A673 (cell line): ENCODE measurements at regions of chr7 and their contacts with region 1.

Region 1: DNA sequence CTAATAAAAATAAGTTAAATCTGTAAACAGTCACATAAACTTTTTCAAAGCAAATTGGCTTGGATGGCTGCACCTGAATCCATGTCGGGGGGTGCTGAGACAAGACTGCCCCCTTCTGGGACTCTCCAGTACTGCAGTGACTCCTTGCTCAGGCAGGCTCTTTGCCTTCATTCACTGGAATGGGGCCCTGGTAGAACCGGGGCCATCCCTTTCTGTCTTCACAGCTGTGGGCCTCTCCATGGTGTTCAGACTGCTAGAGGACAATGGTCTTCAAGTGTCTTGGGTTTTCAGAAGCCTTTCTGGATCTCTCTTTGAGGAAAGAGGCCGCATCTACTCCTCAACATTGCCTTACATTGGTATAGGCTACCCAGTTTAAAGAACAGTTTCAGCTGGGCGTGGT is 16.1 kb upstream of the IMPDH1 start:
- DNase-seq: peak; percentile 78
- H3K4me3 ChIP-seq: no peak overlapping the region
- H3K27ac ChIP-seq: no peak overlapping the region
- H3K4me1 ChIP-seq: no peaks in the 10 kb centered on the region
- H3K27me3 ChIP-seq: no peaks in the 10 kb centered on the region
- CTCF ChIP-seq: peak; percentile 93

Region 2: GRCh38 chr7:127870231-127870907 is 555.5 kb before region 1 on chr7:
- CTCF ChIA-PET with region 1: no interaction called
- POLR2A ChIA-PET with region 1: no interaction called
- intact Hi-C with region 1: no loop called
- DNase-seq: no peak
- H3K4me3 ChIP-seq: no peak overlapping the region
- H3K27ac ChIP-seq: no peak overlapping the region
- H3K4me1 ChIP-seq: no peaks in the 10 kb centered on the region
- H3K27me3 ChIP-seq: no peaks in the 10 kb centered on the region
- CTCF ChIP-seq: no peak

Region 3: DNA sequence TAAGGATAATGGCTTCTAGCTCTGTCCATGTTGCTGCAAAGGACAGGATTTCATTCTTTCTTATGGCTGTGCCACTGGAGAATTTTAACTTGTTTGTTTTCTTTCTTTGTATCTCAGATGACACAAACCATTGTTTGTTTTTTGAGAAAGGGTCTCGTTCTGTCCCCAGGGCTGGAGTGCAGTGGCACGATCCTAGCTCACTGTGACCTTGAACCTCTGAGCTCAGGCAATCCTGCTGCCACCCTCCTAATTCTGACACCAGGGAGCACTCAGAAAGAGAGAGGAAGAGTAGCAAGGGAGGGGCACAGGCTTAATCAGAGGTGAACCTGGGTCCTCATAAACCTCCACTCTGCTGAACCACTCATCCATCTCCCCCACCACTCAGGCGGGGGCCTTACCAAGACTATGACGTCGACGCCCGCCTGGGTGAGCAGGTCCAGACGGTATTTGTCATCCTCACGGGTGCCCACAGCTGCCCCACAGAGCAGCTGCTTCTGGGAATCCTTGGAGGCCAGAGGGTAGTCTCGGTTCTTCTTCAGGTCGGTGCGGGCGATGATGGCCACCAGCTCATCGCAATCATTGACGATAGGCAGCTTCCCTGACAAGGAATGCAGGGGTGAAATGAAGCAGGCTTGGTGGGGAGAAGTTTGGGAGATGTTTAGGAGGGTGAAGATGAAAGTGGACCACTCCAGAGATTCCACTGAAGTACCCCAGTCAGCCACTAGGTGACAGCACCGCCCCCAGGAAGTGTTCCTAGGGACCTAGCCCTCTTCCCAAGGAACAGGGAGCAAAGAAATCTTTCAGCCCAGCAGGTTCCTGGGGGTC is 27.6 kb before region 1 on chr7:
- CTCF ChIA-PET with region 1: no interaction called
- POLR2A ChIA-PET with region 1: no interaction called
- intact Hi-C with region 1: loop called (anchors 1 kb)
- DNase-seq: peak; percentile 70
- H3K4me3 ChIP-seq: no peak overlapping the region
- H3K27ac ChIP-seq: no peak overlapping the region
- H3K4me1 ChIP-seq: no peaks in the 10 kb centered on the region
- H3K27me3 ChIP-seq: no peaks in the 10 kb centered on the region
- CTCF ChIP-seq: peak; percentile 85

Region 4: DNA sequence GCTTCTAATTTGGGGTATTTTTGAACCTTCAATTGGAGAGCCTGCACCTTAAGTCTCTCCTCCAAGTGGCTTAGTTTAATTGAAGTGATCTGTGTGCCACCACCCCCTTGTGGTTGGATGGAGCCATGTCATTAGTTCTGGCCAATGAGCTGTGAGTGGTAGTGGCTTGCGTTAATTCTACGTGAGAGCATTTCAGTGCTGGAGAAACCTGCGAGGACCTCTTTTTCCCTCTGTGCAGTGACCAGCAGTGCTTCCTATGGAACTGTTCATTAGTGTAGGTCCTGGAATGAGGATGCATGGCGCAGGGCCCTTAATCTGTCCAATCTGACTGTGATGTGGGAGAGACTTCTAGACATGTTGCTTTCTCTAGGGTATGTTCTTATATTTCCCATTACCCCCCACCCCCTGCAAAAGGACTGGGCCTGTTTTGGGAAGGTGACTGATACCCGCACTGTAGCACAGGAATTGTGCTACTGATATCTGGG is 33.6 kb after region 1 on chr7:
- CTCF ChIA-PET with region 1: interaction called, 27 read pairs
- POLR2A ChIA-PET with region 1: no interaction called
- intact Hi-C with region 1: loop called (anchors 1 kb)
- DNase-seq: peak; percentile 84
- H3K4me3 ChIP-seq: no peak overlapping the region
- H3K27ac ChIP-seq: no peak overlapping the region
- H3K4me1 ChIP-seq: peaks cover 25% of the 10 kb centered on the region
- H3K27me3 ChIP-seq: no peaks in the 10 kb centered on the region
- CTCF ChIP-seq: peak; percentile 79

Region 5: DNA sequence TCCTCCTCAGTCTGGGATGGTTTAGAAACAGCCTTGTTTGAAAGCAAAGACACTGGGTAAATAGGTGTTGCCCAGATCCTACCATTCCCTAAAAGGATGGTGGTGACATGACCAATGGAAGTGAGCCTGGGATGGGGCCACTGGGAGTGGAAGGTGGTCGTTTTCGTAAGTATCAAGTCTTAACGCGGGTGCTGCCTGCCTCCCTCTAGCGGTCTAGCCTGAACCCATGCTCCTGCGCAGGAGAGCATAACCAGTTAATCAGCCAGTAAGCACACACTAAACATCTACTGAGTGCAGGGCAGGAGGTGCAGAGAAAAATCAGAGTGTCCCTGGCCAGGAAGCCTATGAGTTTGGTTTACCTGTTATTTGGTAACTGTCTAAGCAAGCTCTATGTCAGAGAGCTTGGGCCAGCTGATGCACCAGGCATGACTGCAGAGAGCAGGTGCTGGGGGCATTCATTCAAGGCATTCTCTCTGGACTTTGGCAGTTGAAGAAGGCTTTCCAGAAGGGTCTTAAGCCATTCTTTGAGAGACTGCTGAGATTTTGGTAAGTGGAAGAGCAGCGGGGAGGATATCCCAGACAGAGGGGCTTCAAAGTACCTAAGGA is 247.2 kb after region 1 on chr7:
- CTCF ChIA-PET with region 1: no interaction called
- POLR2A ChIA-PET with region 1: no interaction called
- intact Hi-C with region 1: loop called (anchors 10 kb)
- DNase-seq: peak; percentile 25
- H3K4me3 ChIP-seq: no peak overlapping the region
- H3K27ac ChIP-seq: no peak overlapping the region
- H3K4me1 ChIP-seq: no peaks in the 10 kb centered on the region
- H3K27me3 ChIP-seq: no peaks in the 10 kb centered on the region
- CTCF ChIP-seq: peak; percentile 60

Region 6: GRCh38 chr7:128883622-128884501 is 458.0 kb after region 1 on chr7:
- CTCF ChIA-PET with region 1: interaction called, 4 read pairs
- POLR2A ChIA-PET with region 1: no interaction called
- intact Hi-C with region 1: loop called (anchors 1 kb)
- DNase-seq: peak; percentile 89
- H3K4me3 ChIP-seq: no peak overlapping the region
- H3K27ac ChIP-seq: no peak overlapping the region
- H3K4me1 ChIP-seq: no peaks in the 10 kb centered on the region
- H3K27me3 ChIP-seq: no peaks in the 10 kb centered on the region
- CTCF ChIP-seq: peak; percentile 97

Region 7: DNA sequence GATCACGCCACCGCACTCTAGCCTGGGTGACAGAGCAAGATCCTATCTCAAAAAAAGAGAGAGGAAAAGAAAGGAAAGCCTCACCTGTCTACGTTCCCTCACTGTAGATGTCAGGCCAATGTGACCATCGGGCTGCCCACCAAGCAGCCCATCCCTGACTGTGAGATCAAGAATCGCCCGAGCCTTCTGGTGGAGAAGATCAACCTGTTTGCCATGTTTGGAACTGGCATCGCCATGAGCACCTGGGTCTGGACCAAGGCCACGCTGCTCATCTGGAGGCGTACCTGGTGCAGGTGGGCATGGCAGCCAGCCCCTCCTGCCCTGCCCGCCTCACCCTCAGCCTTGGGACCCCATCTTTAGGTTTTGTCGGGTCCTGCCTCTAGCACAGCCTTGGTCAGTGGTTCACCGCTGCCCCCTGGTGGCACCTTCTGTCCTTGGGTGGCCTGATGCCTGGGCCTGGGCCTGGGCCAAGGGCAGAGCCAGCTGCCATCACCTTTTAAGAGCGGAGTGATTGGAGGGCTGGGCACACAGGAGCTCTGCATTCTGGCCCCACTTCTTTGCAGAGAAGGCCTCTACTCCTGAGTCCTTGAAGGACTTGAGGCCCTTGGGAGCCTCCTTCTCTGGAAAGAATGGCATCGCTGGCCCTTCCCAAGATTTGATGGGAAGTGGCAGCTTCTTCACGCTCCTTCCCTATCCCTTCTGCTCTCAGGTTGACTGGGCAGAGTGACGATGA is 784.6 kb after region 1 on chr7:
- CTCF ChIA-PET with region 1: interaction called, 3 read pairs
- POLR2A ChIA-PET with region 1: no interaction called
- intact Hi-C with region 1: loop called (anchors 5 kb)
- DNase-seq: peak; percentile 52
- H3K4me3 ChIP-seq: no peak overlapping the region
- H3K27ac ChIP-seq: no peak overlapping the region
- H3K4me1 ChIP-seq: no peaks in the 10 kb centered on the region
- H3K27me3 ChIP-seq: no peaks in the 10 kb centered on the region
- CTCF ChIP-seq: peak; percentile 86